A673 (cell line): ENCODE measurements at regions of chr6 and their contacts with region 1.

Region 1: DNA sequence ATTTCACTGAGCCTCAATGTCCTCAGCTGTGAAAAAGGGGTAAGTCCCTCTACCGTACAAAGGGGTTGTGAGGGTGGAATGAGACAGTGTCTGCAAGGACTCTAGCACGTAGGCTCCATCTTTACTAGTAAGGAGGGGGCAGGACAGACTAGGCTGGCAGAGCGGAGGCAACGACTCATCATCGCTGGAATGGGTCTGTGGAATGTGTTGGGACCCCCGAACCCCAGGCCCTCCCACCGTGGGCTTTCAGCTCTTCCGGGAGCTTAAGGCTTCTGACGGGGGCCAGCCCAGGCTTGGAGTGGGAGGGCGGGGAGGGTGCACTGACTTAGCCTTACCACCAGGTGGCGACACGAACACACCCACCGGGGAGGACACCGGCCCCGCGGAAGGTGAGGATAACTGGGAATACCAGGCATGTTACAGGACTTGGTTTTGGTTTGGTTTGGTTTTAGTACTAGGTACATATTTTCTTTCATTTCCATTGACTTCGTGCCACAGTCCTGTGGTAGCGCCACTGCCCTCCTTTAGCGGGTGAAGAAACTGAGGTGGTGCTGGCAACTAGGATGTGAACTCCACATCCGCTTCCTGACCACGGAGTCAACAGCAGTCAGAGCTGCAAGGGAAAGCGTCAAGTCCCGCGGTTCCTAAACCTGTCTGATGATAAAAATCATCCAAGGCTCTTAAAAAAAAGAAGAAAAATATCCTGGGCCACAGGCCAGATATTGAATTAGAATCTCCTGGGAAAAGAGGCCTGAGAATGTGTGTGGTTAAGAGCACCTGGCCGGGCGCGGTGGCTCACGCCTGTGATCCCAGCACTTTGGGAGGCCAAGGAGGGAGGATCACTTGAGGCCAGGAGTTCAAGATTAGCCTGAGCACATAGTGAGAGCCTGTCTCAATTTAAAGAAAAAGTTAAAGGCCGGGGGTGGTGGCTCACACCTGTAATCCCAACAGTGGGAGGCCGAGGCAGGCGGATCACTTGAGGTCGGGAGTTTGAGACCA is 10.3 kb upstream of the TULP1 start:
- DNase-seq: peak; percentile 81
- H3K4me3 ChIP-seq: no peak overlapping the region
- H3K27ac ChIP-seq: no peak overlapping the region
- H3K4me1 ChIP-seq: no peaks in the 10 kb centered on the region
- H3K27me3 ChIP-seq: no peaks in the 10 kb centered on the region
- CTCF ChIP-seq: peak; percentile 95

Region 2: GRCh38 chr6:35583893-35584688 is 61.1 kb after region 1 on chr6:
- CTCF ChIA-PET with region 1: interaction called, 3 read pairs
- POLR2A ChIA-PET with region 1: no interaction called
- intact Hi-C with region 1: loop called (anchors 10 kb)
- DNase-seq: peak; percentile 79
- H3K4me3 ChIP-seq: no peak overlapping the region
- H3K27ac ChIP-seq: no peak overlapping the region
- H3K4me1 ChIP-seq: no peaks in the 10 kb centered on the region
- H3K27me3 ChIP-seq: no peaks in the 10 kb centered on the region
- CTCF ChIP-seq: peak; percentile 85

Region 3: GRCh38 chr6:35731736-35732532 is 209.0 kb after region 1 on chr6:
- CTCF ChIA-PET with region 1: interaction called, 52 read pairs
- POLR2A ChIA-PET with region 1: no interaction called
- intact Hi-C with region 1: loop called (anchors 1 kb)
- DNase-seq: peak; percentile 86
- H3K4me3 ChIP-seq: peak overlapping the region; percentile 90
- H3K27ac ChIP-seq: peak overlapping the region; percentile 81
- H3K4me1 ChIP-seq: peaks cover 29% of the 10 kb centered on the region
- H3K27me3 ChIP-seq: no peaks in the 10 kb centered on the region
- CTCF ChIP-seq: 0 out of 2 replicates have a peak, but pooled peaks have one; percentile 14

Region 4: DNA sequence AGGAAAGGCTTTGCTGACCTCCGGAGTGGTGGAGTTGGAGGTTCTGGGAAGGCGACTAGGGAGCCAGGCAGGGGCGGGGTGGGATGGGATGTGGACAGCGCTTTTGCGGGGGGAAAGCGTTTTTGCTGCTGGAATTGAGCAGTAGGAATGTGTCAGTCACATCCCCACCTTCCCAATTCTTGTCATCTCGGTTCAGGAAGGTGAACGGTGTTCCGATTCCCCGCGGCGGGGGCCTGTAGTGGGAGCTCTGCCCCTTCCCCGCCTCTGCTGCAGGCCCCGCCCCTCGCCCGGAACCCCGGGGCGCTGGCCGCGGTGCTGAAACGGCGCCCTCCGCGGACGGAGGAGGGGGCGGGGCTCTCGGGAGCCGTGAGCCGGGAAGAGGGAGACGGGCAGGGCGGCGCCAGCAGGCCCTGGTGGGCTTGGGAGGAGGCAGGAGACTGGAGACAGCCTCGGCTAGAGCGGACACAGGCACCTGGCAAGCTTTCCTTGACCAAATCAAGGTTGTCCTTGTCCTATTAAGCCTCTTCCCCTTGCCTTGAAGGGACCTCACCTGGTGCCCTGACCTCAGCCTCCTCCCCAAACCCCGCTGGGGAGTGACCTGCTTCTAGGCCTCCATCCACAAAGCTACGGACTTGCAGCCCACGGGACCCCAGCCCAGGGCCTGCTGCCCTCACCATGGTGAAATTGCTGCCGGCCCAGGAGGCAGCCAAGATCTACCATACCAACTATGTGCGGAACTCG is 282.2 kb after region 1 on chr6 and contains the start of gene LHFPL5:
- CTCF ChIA-PET with region 1: interaction called, 10 read pairs
- POLR2A ChIA-PET with region 1: no interaction called
- intact Hi-C with region 1: no loop called
- DNase-seq: peak; percentile 71
- H3K4me3 ChIP-seq: no peak within 1 kb of the TSS
- H3K27ac ChIP-seq: no peak within 1 kb of the TSS
- H3K4me1 ChIP-seq: no peaks in the 10 kb centered on the region
- H3K27me3 ChIP-seq: no peaks in the 10 kb centered on the region
- CTCF ChIP-seq: no peak
- total RNA-seq, gene LHFPL5: not detected in 2 replicates